ENCODE measurements at regions of chr2 and their contacts with region 1.

Region 1: DNA sequence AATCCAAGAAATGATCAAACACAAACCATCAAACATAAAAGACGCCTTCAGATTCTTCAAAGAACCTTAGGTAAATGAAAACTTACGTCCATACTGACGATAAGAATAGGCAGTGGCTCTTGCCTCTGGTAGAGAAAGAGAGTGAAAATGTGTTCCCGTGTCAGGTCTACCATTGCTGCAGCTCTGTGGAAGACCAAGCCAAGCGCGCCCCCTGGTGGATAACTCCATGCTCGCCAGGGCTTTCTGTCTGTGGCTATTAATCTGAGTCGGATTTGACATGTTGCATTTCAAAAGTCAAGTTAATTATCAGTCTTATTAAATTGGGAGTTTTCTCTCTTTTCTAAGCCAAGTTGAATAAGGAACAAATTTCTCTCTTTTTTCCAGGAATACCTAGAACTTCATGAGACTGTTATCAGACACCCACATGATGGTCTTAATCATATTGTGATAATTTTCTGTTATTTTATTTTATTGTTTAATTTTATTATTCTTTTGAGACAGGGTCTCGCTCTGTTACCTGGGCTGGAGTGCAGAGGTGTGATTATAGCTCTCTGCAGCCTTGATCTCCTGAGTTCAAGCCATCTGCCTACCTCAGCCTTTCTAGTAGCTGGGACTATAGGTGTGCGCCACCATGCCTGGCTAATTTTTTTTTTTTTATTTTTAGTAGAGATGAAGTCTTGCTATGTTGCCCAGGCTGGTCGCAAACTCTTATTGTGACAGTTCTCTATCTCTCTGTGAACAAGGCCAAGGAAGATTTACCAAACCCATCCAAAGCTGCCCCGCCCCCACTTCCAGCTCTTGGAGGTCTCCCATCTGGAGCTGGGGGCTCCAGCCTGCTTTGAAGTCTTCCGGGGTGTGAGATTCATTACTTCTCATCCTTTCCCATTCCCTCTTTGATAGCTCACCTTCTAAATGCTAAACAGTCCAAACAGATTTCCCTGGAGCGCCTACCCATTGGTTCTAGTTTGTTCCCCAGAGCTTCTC is 15.8 kb upstream of the ZAP70 start:
- DNase-seq: peak; percentile 83 to 93 (median 88)
- H3K4me3 ChIP-seq: peak overlapping the region in 1 of 7 experiments; percentile 59
- H3K27ac ChIP-seq: no peak overlapping the region
- H3K4me1 ChIP-seq: peaks cover 0 to 4% (median under 1%) of the 10 kb centered on the region in 4 experiments
- H3K27me3 ChIP-seq: no peaks in the 10 kb centered on the region

Region 2: DNA sequence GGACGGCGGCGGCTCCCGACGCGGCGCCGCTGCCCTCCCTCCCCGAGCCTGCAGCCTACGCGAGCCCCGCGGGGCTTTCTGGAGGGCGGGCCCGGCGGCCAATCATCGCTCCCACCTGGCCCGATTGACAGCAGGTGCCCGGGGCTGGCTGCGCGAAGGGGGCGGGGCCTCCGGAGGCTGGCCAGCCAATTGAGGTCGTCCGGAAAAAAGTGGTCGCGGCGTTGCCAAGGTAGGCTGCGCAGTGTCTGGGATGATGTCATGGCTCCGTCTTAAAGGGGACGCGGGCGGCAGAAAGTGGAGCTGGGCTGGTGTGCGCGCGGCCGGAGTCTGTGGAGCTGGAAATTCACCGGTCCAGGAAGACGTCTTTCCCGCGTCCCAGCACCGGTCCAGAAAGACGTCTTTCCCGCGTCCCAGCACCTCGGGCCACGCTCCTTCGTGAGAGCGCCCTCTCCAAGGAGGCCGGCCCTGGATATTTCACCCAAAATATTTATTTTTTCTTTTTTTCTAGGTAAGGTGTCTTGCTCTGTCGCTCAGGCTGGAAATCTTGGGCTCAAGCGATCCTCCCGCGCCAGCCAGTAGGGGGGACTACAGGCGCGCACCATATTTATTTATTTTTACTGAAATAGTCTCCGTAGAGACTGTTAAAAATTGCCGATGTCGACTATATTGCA is 33.4 kb before region 1 on chr2 and contains the start of gene ACTR1B:
- CTCF ChIA-PET with region 1: interaction called, 111 read pairs
- POLR2A ChIA-PET with region 1: interaction called, 10 read pairs
- DNase-seq: peak; percentile 98 to 99 (median 99)
- H3K4me3 ChIP-seq: peak within 1 kb of the TSS; percentile 72 to 95 (median 77)
- H3K27ac ChIP-seq: peak within 1 kb of the TSS; percentile 91 to 98
- H3K4me1 ChIP-seq: peaks cover 3 to 36% (median 32%) of the 10 kb centered on the region in 4 experiments
- H3K27me3 ChIP-seq: no peaks in the 10 kb centered on the region

Region 3: GRCh38 chr2:97713296-97714083 is 15.9 kb after region 1 on chr2 and contains the start of gene ZAP70:
- CTCF ChIA-PET with region 1: interaction called, 108 read pairs
- POLR2A ChIA-PET with region 1: no interaction called
- DNase-seq: peak in 2 of 3 donors; percentile 48 to 58
- H3K4me3 ChIP-seq: no peak within 1 kb of the TSS
- H3K27ac ChIP-seq: peak within 1 kb of the TSS; percentile 44 to 68
- H3K4me1 ChIP-seq: peaks cover 2 to 46% (median 41%) of the 10 kb centered on the region in 4 experiments
- H3K27me3 ChIP-seq: no peaks in the 10 kb centered on the region

Region 4: DNA sequence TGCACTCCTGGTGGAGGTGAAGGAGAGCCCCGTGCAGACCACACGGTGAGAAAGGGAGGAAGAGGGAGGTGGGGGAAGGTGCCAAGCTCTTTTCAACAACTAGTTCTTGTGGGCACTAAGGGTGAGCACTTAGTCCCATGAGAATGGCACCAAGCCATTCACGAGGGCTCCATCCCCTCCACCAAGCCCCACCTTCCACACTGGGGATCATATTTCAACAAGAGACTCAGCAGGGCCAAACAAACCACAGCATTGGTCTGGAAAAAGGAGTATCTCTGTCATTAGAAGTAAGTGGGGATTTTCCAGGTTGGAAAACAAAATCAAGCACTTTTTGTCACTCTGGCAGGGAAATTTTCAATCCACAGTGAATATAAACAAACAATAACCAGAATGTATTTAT is 54.2 kb after region 1 on chr2:
- CTCF ChIA-PET with region 1: interaction called, 43 read pairs
- POLR2A ChIA-PET with region 1: no interaction called
- DNase-seq: no peak
- H3K4me3 ChIP-seq: no peak overlapping the region
- H3K27ac ChIP-seq: no peak overlapping the region
- H3K4me1 ChIP-seq: peaks cover 0 to 9% (median 3%) of the 10 kb centered on the region in 4 experiments
- H3K27me3 ChIP-seq: no peaks in the 10 kb centered on the region

Region 5: DNA sequence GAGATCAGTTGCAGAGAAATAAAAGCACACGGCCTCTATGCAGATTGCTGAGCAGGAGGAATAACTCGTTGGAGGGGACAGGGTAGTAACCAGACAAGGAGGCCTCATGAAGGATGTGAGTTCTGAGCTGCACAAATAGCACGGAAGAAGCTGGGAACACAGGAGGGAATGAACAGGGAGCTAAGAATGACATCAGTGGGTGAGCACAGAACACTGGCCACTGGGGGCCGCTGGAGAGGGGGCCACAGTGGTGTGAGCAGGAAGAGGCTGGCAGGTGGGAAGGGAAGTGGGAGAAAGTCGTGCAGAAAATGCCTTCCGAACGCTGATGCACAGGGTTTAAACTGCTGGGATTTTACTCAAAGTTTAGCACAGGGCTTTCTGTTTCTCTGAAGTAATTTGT is 76.9 kb after region 1 on chr2:
- CTCF ChIA-PET with region 1: interaction called, 27 read pairs
- POLR2A ChIA-PET with region 1: no interaction called
- DNase-seq: peak in 2 of 3 donors; percentile 5 to 24
- H3K4me3 ChIP-seq: no peak overlapping the region
- H3K27ac ChIP-seq: no peak overlapping the region
- H3K4me1 ChIP-seq: peaks cover 0 to 6% (median 2%) of the 10 kb centered on the region in 4 experiments
- H3K27me3 ChIP-seq: no peaks in the 10 kb centered on the region

Measured in common myeloid progenitor, CD34-positive (primary cell).